ENCODE measurements at regions of chr4 and their contacts with region 1.

Region 1: DNA sequence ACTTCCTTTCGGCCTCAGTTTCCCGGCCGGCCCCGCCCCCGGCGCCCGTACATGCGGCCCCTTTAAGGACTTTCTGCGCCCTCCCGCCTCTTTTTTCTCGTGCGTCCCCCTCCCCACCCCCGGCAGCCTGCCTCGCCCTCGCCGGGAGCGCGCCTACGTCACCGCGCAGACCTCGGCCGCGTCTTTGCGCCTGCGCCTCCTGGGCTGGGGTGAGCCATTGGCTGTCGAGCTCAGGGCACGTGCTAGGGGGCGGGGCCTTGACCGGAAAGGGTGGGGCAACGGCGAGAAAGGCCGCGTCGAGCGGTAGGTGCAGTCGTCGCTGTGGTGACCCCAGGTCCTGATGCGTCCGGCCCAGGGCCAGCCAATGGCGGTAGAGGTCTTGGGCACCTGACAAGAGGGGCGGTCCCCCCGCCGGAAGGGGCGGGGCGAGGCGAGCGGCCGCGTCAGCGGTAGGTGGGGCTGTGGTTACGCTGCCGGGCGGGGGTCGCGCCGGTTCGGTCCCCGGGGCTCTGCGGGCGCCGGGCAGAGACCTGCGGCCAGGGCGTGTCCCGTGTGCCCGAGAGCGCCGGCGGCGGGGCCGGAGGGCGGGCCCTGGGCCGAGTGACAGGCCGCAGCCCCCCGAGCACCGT is at the start of gene UVSSA:
- DNase-seq: peak; percentile 98 to 100 (median 100)
- ATAC-seq: peak; percentile 89 to 93
- H3K4me3 Mint-ChIP-seq: peak within 1 kb of the TSS; percentile 83 to 98 (median 94)
- H3K27ac Mint-ChIP-seq: peak within 1 kb of the TSS; percentile 84 to 99 (median 96)
- H3K4me1 Mint-ChIP-seq: peaks cover 17 to 48% (median 39%) of the 10 kb centered on the region in 4 donors
- H3K27me3 Mint-ChIP-seq: no peaks in the 10 kb centered on the region
- polyA plus RNA-seq, gene UVSSA: 1.9 to 6.2 (median 2.4) TPM

Region 2: DNA sequence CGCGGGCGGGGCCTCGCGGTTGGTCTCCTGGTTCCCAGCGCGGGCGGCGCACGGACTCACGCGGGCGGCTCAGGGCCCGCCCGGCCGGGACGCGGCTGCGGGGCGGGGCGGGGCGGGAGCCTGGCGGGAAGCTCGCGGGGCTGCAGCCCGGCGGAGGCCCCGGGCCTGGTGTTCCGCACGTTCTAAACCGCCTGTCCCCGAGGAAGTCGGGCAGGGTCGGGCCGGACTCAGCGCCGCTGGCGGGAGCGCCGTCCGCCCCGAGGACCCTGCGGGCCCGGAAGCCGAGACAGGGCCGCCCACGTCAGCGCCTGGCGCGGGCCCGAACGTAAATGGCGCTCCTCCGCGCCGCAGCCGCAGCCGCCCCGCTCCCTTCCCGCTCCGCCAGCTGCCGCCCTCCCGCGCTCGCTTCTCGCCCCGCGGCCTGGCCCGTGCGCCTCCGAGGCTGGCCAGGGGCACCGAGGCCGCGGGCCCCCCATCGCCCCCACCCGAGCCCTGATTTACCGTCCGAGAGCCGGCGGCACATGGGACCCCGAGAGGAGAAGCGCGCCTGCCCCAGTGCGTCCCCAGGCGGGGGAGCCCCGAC is 97.7 kb before region 1 on chr4:
- POLR2A ChIA-PET with region 1: interaction called, 106 read pairs
- DNase-seq: peak; percentile 75 to 91 (median 86)
- ATAC-seq: peak; percentile 64 to 69
- H3K4me3 Mint-ChIP-seq: peak overlapping the region; percentile 83 to 95 (median 90)
- H3K27ac Mint-ChIP-seq: peak overlapping the region; percentile 90 to 97 (median 95)
- H3K4me1 Mint-ChIP-seq: peaks cover 31 to 76% (median 70%) of the 10 kb centered on the region in 4 donors
- H3K27me3 Mint-ChIP-seq: no peaks in the 10 kb centered on the region

Region 3: GRCh38 chr4:1266881-1267763 is 79.8 kb before region 1 on chr4:
- POLR2A ChIA-PET with region 1: interaction called, 10 read pairs
- DNase-seq: peak in 4 of 10 donors; percentile 36 to 76 (median 59)
- ATAC-seq: peak; percentile 76 to 88
- H3K4me3 Mint-ChIP-seq: peak overlapping the region; percentile 76 to 89 (median 83)
- H3K27ac Mint-ChIP-seq: peak overlapping the region; percentile 83 to 99 (median 97)
- H3K4me1 Mint-ChIP-seq: peaks cover 11 to 26% (median 21%) of the 10 kb centered on the region in 4 donors
- H3K27me3 Mint-ChIP-seq: no peaks in the 10 kb centered on the region

Region 4: DNA sequence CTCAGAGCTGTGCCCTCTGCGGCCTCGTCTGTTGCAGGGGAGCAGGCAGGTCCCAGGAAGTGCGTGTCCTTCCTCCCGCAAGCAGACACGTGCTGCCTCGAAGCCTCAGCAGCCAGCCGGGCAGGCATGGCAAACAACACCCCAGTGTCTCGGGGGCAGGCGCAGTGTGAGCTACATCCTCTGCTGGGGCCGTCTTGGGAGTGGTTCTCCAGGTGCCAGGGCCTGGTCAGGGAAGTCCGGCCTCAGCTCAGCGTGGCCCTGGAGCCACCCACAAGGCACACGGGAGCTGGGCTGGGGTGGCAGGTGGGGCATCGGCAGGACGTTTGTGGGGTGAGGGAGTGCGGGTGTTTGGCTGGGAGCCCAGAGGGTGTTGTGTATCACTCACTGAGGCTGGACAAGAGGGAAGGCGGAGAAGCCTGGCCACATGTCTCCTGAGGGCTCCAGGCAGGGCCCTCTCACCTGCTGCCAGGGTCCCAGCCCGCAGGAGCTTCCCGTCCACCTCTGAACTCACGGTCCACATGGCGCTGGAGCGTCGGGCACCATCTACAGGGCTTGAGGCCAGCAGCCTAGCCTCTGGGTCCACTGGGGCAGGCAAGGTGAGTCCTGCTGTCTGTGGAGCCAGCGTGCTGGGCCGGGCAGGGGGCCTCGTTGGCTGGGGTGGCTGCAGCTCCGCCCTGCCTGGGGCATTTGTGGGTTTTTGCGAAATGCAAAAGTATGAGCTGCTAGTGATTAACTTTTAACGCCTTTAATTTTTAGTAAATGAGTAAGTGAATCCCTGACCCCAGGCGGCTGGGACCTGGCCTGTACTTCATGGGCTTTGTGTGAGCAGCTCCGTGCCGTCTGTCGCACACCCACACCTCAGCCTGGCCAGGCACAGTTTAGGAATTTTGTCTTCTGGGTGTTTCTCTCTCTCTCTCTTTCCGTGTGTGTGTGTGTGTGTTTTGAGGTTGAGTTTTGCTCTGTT is 17.2 kb before region 1 on chr4:
- POLR2A ChIA-PET with region 1: interaction called, 27 read pairs
- DNase-seq: peak in 9 of 10 donors; percentile 33 to 79 (median 57)
- ATAC-seq: peak; percentile 64 to 79
- H3K4me3 Mint-ChIP-seq: peak overlapping the region in 9 of 10 donors; percentile 40 to 80 (median 76)
- H3K27ac Mint-ChIP-seq: peak overlapping the region; percentile 87 to 98 (median 95)
- H3K4me1 Mint-ChIP-seq: peaks cover 17 to 43% (median 32%) of the 10 kb centered on the region in 4 donors
- H3K27me3 Mint-ChIP-seq: no peaks in the 10 kb centered on the region

Region 5: DNA sequence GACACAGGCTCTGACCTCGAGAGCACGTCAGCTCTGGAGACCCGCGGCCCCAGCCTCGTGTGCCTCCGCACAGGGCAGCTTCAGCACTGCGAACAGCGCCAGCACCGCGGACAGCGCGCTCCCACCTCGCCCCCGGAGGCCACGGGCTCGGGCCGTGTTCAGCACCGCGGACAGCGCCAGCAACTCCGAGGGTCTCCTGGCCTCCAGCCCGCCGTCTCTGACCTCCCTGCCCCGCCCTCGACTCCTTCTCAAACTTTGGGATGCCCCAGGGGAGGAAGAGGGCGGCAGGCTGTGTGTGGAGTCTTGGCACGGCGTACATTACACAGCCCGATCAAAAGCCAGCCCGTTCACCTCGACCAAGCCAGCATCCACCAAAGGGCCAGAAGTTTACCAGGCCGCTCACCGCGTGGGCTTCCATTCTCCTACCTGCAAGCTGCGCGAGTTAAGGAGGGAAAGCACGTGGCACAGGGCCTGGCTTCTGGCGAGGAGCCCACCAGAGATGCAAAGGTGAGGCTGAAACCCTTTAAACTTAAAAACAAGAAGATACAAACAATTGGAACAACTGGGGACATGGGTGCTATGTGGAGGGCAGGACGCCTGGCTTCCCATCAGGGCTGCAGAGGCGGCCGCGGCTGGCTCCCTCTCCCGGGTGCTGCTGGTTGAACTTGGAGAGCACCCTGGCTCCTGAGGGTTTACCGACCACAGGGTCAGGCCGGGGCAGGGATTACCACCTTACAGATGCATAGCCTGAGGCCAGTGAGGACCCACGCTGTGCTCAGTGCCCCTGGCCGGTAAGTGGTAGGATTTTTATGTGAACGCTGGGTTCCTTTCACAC is 63.8 kb after region 1 on chr4:
- POLR2A ChIA-PET with region 1: no interaction called
- DNase-seq: peak; percentile 12 to 77 (median 54)
- ATAC-seq: peak; percentile 69 to 81
- H3K4me3 Mint-ChIP-seq: no peak overlapping the region
- H3K27ac Mint-ChIP-seq: no peak overlapping the region
- H3K4me1 Mint-ChIP-seq: peaks cover 0 to 15% (median 5%) of the 10 kb centered on the region in 4 donors
- H3K27me3 Mint-ChIP-seq: peaks cover 14 to 77% (median 43%) of the 10 kb centered on the region in 5 donors

Region 6: GRCh38 chr4:1579901-1580691 is 233.2 kb after region 1 on chr4:
- POLR2A ChIA-PET with region 1: interaction called, 11 read pairs
- DNase-seq: peak; percentile 81 to 97 (median 93)
- ATAC-seq: peak; percentile 54 to 77
- H3K4me3 Mint-ChIP-seq: peak overlapping the region; percentile 61 to 85 (median 82)
- H3K27ac Mint-ChIP-seq: peak overlapping the region in 9 of 10 donors; percentile 4 to 88 (median 68)
- H3K4me1 Mint-ChIP-seq: peaks cover 3 to 12% (median 8%) of the 10 kb centered on the region in 4 donors
- H3K27me3 Mint-ChIP-seq: no peaks in the 10 kb centered on the region

Region 7: GRCh38 chr4:1604711-1605205 is 257.9 kb after region 1 on chr4:
- POLR2A ChIA-PET with region 1: interaction called, 21 read pairs
- DNase-seq: peak in 7 of 10 donors; percentile 11 to 89 (median 61)
- ATAC-seq: peak; percentile 59 to 88
- H3K4me3 Mint-ChIP-seq: peak overlapping the region in 9 of 10 donors; percentile 15 to 86 (median 77)
- H3K27ac Mint-ChIP-seq: peak overlapping the region in 9 of 10 donors; percentile 53 to 95 (median 92)
- H3K4me1 Mint-ChIP-seq: peaks cover 3 to 36% (median 20%) of the 10 kb centered on the region in 4 donors
- H3K27me3 Mint-ChIP-seq: peaks cover 0 to 10% (median 0%) of the 10 kb centered on the region in 5 donors

Measured in naive thymus-derived CD8-positive, alpha-beta T cell (primary cell).